MCF 10A (cell line): ENCODE measurements at regions of chr22 and their contacts with region 1.

Region 1: DNA sequence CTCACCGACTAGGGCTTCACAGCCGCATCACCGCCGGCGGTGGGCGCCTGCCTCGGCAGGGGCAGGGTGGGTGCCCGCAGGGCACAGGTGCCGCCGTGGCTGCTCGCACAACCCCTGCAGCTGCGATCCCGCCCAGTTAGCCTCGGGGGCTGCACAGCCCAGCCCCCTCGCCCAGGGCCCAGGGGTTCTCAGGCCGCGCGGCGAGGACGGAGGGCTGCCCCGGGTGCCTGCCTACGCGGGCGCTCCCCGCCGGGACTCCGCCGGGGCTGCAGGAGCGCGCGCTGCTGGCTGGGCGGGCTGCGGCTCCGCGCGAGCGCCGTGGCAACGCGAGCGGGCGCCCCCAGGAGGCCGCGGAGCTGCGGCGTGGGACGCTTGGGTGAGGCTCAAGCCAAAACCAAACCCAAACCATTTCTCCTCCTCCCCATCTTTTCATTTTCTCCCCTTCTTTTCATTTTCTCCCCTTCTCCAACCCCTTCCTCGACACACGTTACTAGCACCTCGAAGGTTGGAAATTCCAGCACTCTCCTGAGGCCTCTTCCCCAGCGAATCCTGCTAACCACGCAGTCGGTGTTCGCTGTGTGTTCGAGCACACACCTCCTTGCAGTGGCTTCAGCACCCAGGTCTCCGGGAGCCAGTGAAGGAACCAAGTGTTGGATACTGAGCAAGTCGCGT is at the start of gene MICAL3:
- DNase-seq: peak; percentile 66
- H3K4me3 Mint-ChIP-seq: peak within 1 kb of the TSS; percentile 85
- H3K27ac Mint-ChIP-seq: peak within 1 kb of the TSS; percentile 17
- H3K4me1 Mint-ChIP-seq: peaks cover 21% of the 10 kb centered on the region
- H3K27me3 Mint-ChIP-seq: no peaks in the 10 kb centered on the region
- CTCF ChIP-seq: peak; percentile 53
- total RNA-seq, gene MICAL3: 54.1 and 62.1 TPM in 2 replicates

Region 2: GRCh38 chr22:18012531-18012930 is 11.9 kb before region 1 on chr22:
- CTCF ChIA-PET with region 1: interaction called, 5 read pairs
- POLR2A ChIA-PET with region 1: interaction called, 69 read pairs
- intact Hi-C with region 1: no loop called
- DNase-seq: no peak
- H3K4me3 Mint-ChIP-seq: no peak overlapping the region
- H3K27ac Mint-ChIP-seq: peak overlapping the region; percentile 41
- H3K4me1 Mint-ChIP-seq: peaks cover 22% of the 10 kb centered on the region
- H3K27me3 Mint-ChIP-seq: no peaks in the 10 kb centered on the region
- CTCF ChIP-seq: no peak

Region 3: GRCh38 chr22:18057568-18058209 is 33.3 kb after region 1 on chr22:
- CTCF ChIA-PET with region 1: interaction called, 8 read pairs
- POLR2A ChIA-PET with region 1: interaction called, 20 read pairs
- intact Hi-C with region 1: no loop called
- DNase-seq: peak; percentile 99
- H3K4me3 Mint-ChIP-seq: no peak overlapping the region
- H3K27ac Mint-ChIP-seq: peak overlapping the region; percentile 5
- H3K4me1 Mint-ChIP-seq: peaks cover 31% of the 10 kb centered on the region
- H3K27me3 Mint-ChIP-seq: no peaks in the 10 kb centered on the region
- CTCF ChIP-seq: no peak